ENCODE measurements at regions of chr15 and their contacts with region 1.

Region 1: GRCh38 chr15:40928821-40929659 is at the start of gene DLL4:
- DNase-seq: peak in 2 of 3 donors; percentile 56 to 67
- H3K4me3 ChIP-seq: peak within 1 kb of the TSS in 6 of 7 experiments; percentile 38 to 70 (median 56)
- H3K27ac ChIP-seq: no peak within 1 kb of the TSS
- H3K4me1 ChIP-seq: peaks cover 8 to 78% (median 75%) of the 10 kb centered on the region in 4 experiments
- H3K27me3 ChIP-seq: peaks cover 3 to 83% (median 35%) of the 10 kb centered on the region in 5 experiments

Region 2: DNA sequence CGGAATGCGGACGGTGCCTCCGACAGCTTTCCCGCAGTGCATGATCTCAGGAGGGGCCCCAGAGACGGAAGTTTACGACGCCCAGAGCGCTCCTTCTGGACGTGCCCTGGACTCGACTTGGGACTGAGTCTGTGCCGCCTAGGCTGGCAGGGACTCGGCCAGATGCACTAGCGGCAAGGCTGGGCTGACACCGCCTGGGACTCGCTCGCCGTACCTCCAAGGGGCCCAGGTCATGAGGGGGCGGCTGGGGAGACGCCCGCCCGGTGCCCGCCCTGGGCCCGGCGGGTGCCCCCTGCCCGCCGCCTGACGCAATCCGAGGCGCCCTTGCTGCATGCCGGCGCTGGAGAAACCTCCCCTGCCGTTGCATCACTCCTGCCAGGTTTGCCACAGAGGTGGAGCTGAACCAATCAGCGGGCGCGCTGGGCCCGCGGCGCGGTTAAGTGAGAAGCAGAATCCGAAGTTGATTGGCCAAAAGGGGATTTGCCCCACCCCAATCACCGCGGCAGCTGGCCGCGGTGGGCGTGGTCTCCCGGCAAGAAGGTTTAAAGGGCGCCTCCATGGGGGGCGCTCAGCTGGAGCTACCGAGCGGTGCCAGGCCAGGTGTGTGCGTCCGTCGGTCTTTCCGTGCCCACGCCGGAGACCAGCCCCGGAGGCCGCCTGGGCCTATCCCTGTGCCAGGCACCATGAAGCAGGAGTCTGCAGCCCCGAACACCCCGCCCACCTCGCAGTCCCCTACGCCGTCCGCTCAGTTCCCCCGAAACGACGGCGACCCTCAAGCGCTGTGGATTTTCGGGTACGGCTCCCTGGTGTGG is 24.1 kb after region 1 on chr15 and contains the start of gene CHAC1:
- CTCF ChIA-PET with region 1: interaction called, 14 read pairs
- POLR2A ChIA-PET with region 1: interaction called, 4 read pairs
- DNase-seq: peak; percentile 86 to 94 (median 94)
- H3K4me3 ChIP-seq: peak within 1 kb of the TSS; percentile 38 to 83 (median 63)
- H3K27ac ChIP-seq: peak within 1 kb of the TSS in 1 of 2 experiments; percentile 74
- H3K4me1 ChIP-seq: peaks cover 0 to 26% (median 19%) of the 10 kb centered on the region in 4 experiments
- H3K27me3 ChIP-seq: peaks cover 0 to 8% (median 0%) of the 10 kb centered on the region in 5 experiments